Sigmoid colon (tissue), 7 donors: ENCODE measurements at regions of chr13 and their contacts with region 1.

Region 1: GRCh38 chr13:35953537-35954206 is 177.5 kb downstream of the DCLK1 start:
- DNase-seq: peak; percentile 96
- H3K4me3 ChIP-seq: no peak overlapping the region
- H3K27ac ChIP-seq: peak overlapping the region; percentile 39 to 55 (median 50)
- H3K4me1 ChIP-seq: peaks cover 0 to 36% (median 32%) of the 10 kb centered on the region in 4 donors
- H3K27me3 ChIP-seq: no peaks in the 10 kb centered on the region
- CTCF ChIP-seq: peak; percentile 22 to 63 (median 40)
- EP300 ChIP-seq: peak in 2 of 4 donors; percentile 11 to 15
- POLR2A ChIP-seq: no peak

Region 2: GRCh38 chr13:35252536-35253205 is 701.0 kb before region 1 on chr13:
- intact Hi-C with region 1: no loop called
- DNase-seq: no peak
- H3K4me3 ChIP-seq: no peak overlapping the region
- H3K27ac ChIP-seq: no peak overlapping the region
- H3K4me1 ChIP-seq: no peaks in the 10 kb centered on the region
- H3K27me3 ChIP-seq: no peaks in the 10 kb centered on the region
- CTCF ChIP-seq: no peak
- EP300 ChIP-seq: no peak
- POLR2A ChIP-seq: no peak

Region 3: GRCh38 chr13:35630551-35631275 is 323.0 kb before region 1 on chr13:
- intact Hi-C with region 1: loop called (anchors 5 kb)
- DNase-seq: no peak
- H3K4me3 ChIP-seq: no peak overlapping the region
- H3K27ac ChIP-seq: no peak overlapping the region
- H3K4me1 ChIP-seq: peaks cover 0 to 4% (median 0%) of the 10 kb centered on the region in 4 donors
- H3K27me3 ChIP-seq: no peaks in the 10 kb centered on the region
- CTCF ChIP-seq: peak; percentile 39 to 70 (median 58)
- EP300 ChIP-seq: no peak
- POLR2A ChIP-seq: no peak

Region 4: GRCh38 chr13:35720690-35721554 is 232.8 kb before region 1 on chr13:
- intact Hi-C with region 1: loop called (anchors 5 kb)
- DNase-seq: peak; percentile 74
- H3K4me3 ChIP-seq: peak overlapping the region in 3 of 4 donors; percentile 9 to 31 (median 17)
- H3K27ac ChIP-seq: peak overlapping the region in 3 of 4 donors; percentile 30 to 70 (median 32)
- H3K4me1 ChIP-seq: peaks cover 0 to 54% (median 52%) of the 10 kb centered on the region in 4 donors
- H3K27me3 ChIP-seq: no peaks in the 10 kb centered on the region
- CTCF ChIP-seq: peak; percentile 84 to 95 (median 92)
- EP300 ChIP-seq: no peak
- POLR2A ChIP-seq: no peak

Region 5: GRCh38 chr13:35789335-35790165 is 164.1 kb before region 1 on chr13:
- intact Hi-C with region 1: loop called (anchors 5 kb)
- DNase-seq: no peak
- H3K4me3 ChIP-seq: no peak overlapping the region
- H3K27ac ChIP-seq: no peak overlapping the region
- H3K4me1 ChIP-seq: peaks cover 0 to 48% (median 39%) of the 10 kb centered on the region in 4 donors
- H3K27me3 ChIP-seq: no peaks in the 10 kb centered on the region
- CTCF ChIP-seq: peak in 3 of 4 experiments; percentile 47 to 60 (median 56)
- EP300 ChIP-seq: no peak
- POLR2A ChIP-seq: no peak

Region 6: GRCh38 chr13:35857769-35858168 is 95.9 kb before region 1 on chr13:
- intact Hi-C with region 1: loop called (anchors 1 kb)
- DNase-seq: no peak
- H3K4me3 ChIP-seq: no peak overlapping the region
- H3K27ac ChIP-seq: peak overlapping the region; percentile 78 to 90 (median 87)
- H3K4me1 ChIP-seq: peaks cover 0 to 55% (median 37%) of the 10 kb centered on the region in 4 donors
- H3K27me3 ChIP-seq: no peaks in the 10 kb centered on the region
- CTCF ChIP-seq: no peak
- EP300 ChIP-seq: no peak
- POLR2A ChIP-seq: no peak